ENCODE measurements at regions of chr12 and their contacts with region 1.

Region 1: GRCh38 chr12:44317651-44318126 is 481.8 kb downstream of the TMEM117 start:
- DNase-seq: peak in 1 of 2 experiments; percentile 25
- H3K4me3 ChIP-seq: no peak overlapping the region
- H3K4me3 Mint-ChIP-seq: no peak overlapping the region
- H3K27ac Mint-ChIP-seq: no peak overlapping the region
- H3K4me1 ChIP-seq: peaks cover 9% of the 10 kb centered on the region
- H3K4me1 Mint-ChIP-seq: peaks cover 24% of the 10 kb centered on the region
- H3K27me3 ChIP-seq: no peaks in the 10 kb centered on the region
- H3K27me3 Mint-ChIP-seq: no peaks in the 10 kb centered on the region
- CTCF ChIP-seq: peak; percentile 32 to 40

Region 2: GRCh38 chr12:44258246-44258645 is 59.4 kb before region 1 on chr12:
- CTCF ChIA-PET with region 1: no interaction called
- POLR2A ChIA-PET with region 1: no interaction called
- intact Hi-C with region 1: no loop called
- DNase-seq: no peak
- H3K4me3 ChIP-seq: no peak overlapping the region
- H3K4me3 Mint-ChIP-seq: no peak overlapping the region
- H3K27ac Mint-ChIP-seq: no peak overlapping the region
- H3K4me1 ChIP-seq: no peaks in the 10 kb centered on the region
- H3K4me1 Mint-ChIP-seq: no peaks in the 10 kb centered on the region
- H3K27me3 ChIP-seq: no peaks in the 10 kb centered on the region
- H3K27me3 Mint-ChIP-seq: no peaks in the 10 kb centered on the region
- CTCF ChIP-seq: no peak

Region 3: GRCh38 chr12:44296624-44297197 is 21.0 kb before region 1 on chr12:
- CTCF ChIA-PET with region 1: no interaction called
- POLR2A ChIA-PET with region 1: no interaction called
- intact Hi-C with region 1: loop called (anchors 2 kb)
- DNase-seq: peak; percentile 65 to 84
- H3K4me3 ChIP-seq: no peak overlapping the region
- H3K4me3 Mint-ChIP-seq: peak overlapping the region; percentile 35
- H3K27ac Mint-ChIP-seq: peak overlapping the region; percentile 79
- H3K4me1 ChIP-seq: peaks cover 27% of the 10 kb centered on the region
- H3K4me1 Mint-ChIP-seq: no peaks in the 10 kb centered on the region
- H3K27me3 ChIP-seq: no peaks in the 10 kb centered on the region
- H3K27me3 Mint-ChIP-seq: no peaks in the 10 kb centered on the region
- CTCF ChIP-seq: no peak

Region 4: GRCh38 chr12:44331269-44331668 is 13.6 kb after region 1 on chr12:
- CTCF ChIA-PET with region 1: no interaction called
- POLR2A ChIA-PET with region 1: no interaction called
- intact Hi-C with region 1: loop called (anchors 2 kb)
- DNase-seq: peak; percentile 40 to 51
- H3K4me3 ChIP-seq: no peak overlapping the region
- H3K4me3 Mint-ChIP-seq: no peak overlapping the region
- H3K27ac Mint-ChIP-seq: no peak overlapping the region
- H3K4me1 ChIP-seq: peaks cover 21% of the 10 kb centered on the region
- H3K4me1 Mint-ChIP-seq: peaks cover 7% of the 10 kb centered on the region
- H3K27me3 ChIP-seq: no peaks in the 10 kb centered on the region
- H3K27me3 Mint-ChIP-seq: no peaks in the 10 kb centered on the region
- CTCF ChIP-seq: no peak

Region 5: GRCh38 chr12:44342371-44342770 is 24.7 kb after region 1 on chr12:
- CTCF ChIA-PET with region 1: no interaction called
- POLR2A ChIA-PET with region 1: no interaction called
- intact Hi-C with region 1: no loop called
- DNase-seq: no peak
- H3K4me3 ChIP-seq: no peak overlapping the region
- H3K4me3 Mint-ChIP-seq: no peak overlapping the region
- H3K27ac Mint-ChIP-seq: no peak overlapping the region
- H3K4me1 ChIP-seq: no peaks in the 10 kb centered on the region
- H3K4me1 Mint-ChIP-seq: no peaks in the 10 kb centered on the region
- H3K27me3 ChIP-seq: no peaks in the 10 kb centered on the region
- H3K27me3 Mint-ChIP-seq: no peaks in the 10 kb centered on the region
- CTCF ChIP-seq: no peak

Region 6: DNA sequence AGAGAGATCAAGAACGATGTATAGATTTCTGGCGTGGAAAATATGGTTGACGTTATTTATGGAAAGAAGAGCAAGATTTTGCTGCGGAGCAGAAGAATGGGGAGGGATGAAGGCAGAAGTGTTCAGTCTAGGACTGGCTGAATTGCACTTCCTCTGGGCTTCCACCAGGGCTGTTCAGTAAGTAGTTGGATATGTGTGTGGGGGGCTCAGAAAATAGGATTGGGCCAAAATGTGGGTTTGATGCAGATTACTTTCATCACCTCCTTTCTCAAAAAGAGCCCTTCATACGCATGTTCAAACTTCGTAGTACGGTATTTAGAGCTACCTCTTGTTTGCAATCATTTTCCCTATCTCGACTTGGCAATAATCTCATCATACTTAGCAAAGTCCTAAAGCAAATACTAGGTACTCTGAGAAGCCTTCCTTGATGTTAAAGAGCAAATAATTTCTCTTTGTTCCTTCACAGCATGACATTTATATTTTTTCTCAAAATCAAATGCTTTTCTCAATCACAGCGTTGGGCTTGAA is 209.0 kb after region 1 on chr12:
- CTCF ChIA-PET with region 1: no interaction called
- POLR2A ChIA-PET with region 1: no interaction called
- intact Hi-C with region 1: loop called (anchors 5 kb)
- DNase-seq: no peak
- H3K4me3 ChIP-seq: no peak overlapping the region
- H3K4me3 Mint-ChIP-seq: peak overlapping the region; percentile 3
- H3K27ac Mint-ChIP-seq: peak overlapping the region; percentile 65
- H3K4me1 ChIP-seq: peaks cover 49% of the 10 kb centered on the region
- H3K4me1 Mint-ChIP-seq: peaks cover 21% of the 10 kb centered on the region
- H3K27me3 ChIP-seq: no peaks in the 10 kb centered on the region
- H3K27me3 Mint-ChIP-seq: no peaks in the 10 kb centered on the region
- CTCF ChIP-seq: peak; percentile 11 to 32

Region 7: DNA sequence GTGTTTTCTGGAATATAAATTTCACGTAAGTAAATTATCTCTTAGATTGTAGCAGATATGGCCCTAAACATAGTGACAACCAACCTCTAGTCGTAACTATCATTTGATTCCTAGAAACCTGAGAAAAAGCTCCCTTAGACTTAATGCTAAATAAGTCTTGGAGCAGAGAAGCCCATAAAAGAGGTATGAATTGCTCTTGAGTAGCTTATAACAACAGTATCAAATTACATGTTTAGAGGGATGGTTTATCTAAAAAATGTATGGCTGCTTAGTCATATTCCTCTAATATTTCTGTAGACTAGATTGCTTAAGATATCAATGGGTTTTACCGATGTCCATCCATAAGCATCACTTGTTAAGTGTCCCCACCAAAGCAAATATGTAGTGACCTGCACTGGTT is 298.7 kb after region 1 on chr12:
- CTCF ChIA-PET with region 1: no interaction called
- POLR2A ChIA-PET with region 1: no interaction called
- intact Hi-C with region 1: no loop called
- DNase-seq: no peak
- H3K4me3 ChIP-seq: no peak overlapping the region
- H3K4me3 Mint-ChIP-seq: no peak overlapping the region
- H3K27ac Mint-ChIP-seq: no peak overlapping the region
- H3K4me1 ChIP-seq: no peaks in the 10 kb centered on the region
- H3K4me1 Mint-ChIP-seq: no peaks in the 10 kb centered on the region
- H3K27me3 ChIP-seq: no peaks in the 10 kb centered on the region
- H3K27me3 Mint-ChIP-seq: peaks cover 6% of the 10 kb centered on the region
- CTCF ChIP-seq: no peak